ENCODE measurements at regions of chr19 and their contacts with region 1.

Region 1: GRCh38 chr19:39412100-39412866 is at the start of gene PLEKHG2:
- DNase-seq: peak; percentile 100
- ATAC-seq: peak; percentile 40 to 66
- H3K4me3 ChIP-seq: peak within 1 kb of the TSS; percentile 76
- H3K27ac ChIP-seq: peak within 1 kb of the TSS; percentile 94 to 99
- H3K4me1 ChIP-seq: peaks cover 43% of the 10 kb centered on the region
- CTCF ChIP-seq: peak; percentile 99
- EP300 ChIP-seq: peak in 1 of 2 experiments; percentile 61; a peak in 1 of 5 replicates
- POLR2A ChIP-seq: peak; percentile 64
- RAD21 ChIP-seq: peak; percentile 55 to 82
- polyA plus RNA-seq, gene PLEKHG2: 21.6 and 35.1 TPM in 2 replicates

Region 2: DNA sequence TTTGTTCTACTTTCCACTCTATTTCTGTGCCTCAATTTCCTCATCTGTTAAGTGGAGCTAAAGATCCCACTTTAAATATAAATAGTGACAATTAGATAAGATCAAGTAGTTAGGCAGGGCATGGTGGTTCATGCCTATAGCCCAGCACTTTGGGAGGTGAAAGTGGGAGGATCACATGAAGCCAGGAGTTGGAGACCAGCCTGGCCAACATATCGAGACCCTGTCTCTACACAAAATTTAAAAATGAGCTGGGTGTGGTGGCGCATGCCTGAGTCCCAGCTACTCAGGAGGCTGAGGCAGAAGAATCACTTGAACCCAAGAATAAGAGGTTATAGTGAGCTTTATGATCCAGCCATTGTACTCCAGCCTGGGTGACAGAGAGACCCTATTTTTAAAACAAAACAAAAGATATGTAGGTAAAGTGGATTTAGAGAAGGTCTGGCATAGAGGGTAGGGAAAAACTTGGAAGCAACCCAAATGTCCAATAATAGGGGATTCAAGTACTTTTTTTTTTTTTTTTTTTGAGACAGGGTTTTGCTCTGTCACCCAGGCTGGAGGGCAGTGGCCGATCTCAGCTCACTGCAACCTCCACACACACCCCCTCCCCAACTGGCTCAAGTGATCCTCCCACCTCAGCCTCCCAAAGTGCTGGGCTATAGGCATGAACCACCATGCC is 292.6 kb before region 1 on chr19:
- CTCF ChIA-PET with region 1: interaction called, 10 read pairs
- POLR2A ChIA-PET with region 1: no interaction called
- DNase-seq: no peak
- ATAC-seq: no peak
- H3K4me3 ChIP-seq: no peak overlapping the region
- H3K27ac ChIP-seq: peak overlapping the region in 1 of 2 experiments; percentile 53; a peak in 4 of 6 replicates
- H3K4me1 ChIP-seq: peaks cover 19% of the 10 kb centered on the region
- CTCF ChIP-seq: no peak
- EP300 ChIP-seq: no peak
- POLR2A ChIP-seq: no peak
- RAD21 ChIP-seq: no peak

Region 3: GRCh38 chr19:39351537-39352064 is 60.7 kb before region 1 on chr19:
- CTCF ChIA-PET with region 1: interaction called, 18 read pairs
- POLR2A ChIA-PET with region 1: interaction called, 4 read pairs
- DNase-seq: peak in 1 of 2 experiments; percentile 42
- ATAC-seq: no peak
- H3K4me3 ChIP-seq: no peak overlapping the region
- H3K27ac ChIP-seq: no peak overlapping the region
- H3K4me1 ChIP-seq: peaks cover 6% of the 10 kb centered on the region; the same call in 1 of the 3 replicates
- CTCF ChIP-seq: no peak
- EP300 ChIP-seq: 0 out of 5 replicates have a peak, but pooled peaks of 1 of the 2 experiments have one; percentile 18
- POLR2A ChIP-seq: no peak
- RAD21 ChIP-seq: no peak

Region 4: GRCh38 chr19:39372047-39372802 is 40.1 kb before region 1 on chr19:
- CTCF ChIA-PET with region 1: interaction called, 15 read pairs
- POLR2A ChIA-PET with region 1: interaction called, 9 read pairs
- DNase-seq: no peak
- ATAC-seq: no peak
- H3K4me3 ChIP-seq: no peak overlapping the region
- H3K27ac ChIP-seq: no peak overlapping the region
- H3K4me1 ChIP-seq: no peaks in the 10 kb centered on the region
- CTCF ChIP-seq: no peak
- EP300 ChIP-seq: no peak
- POLR2A ChIP-seq: no peak
- RAD21 ChIP-seq: no peak

Region 5: GRCh38 chr19:39390755-39391592 is 21.3 kb before region 1 on chr19 and contains the starts of genes MED29 and PAF1:
- CTCF ChIA-PET with region 1: interaction called, 484 read pairs
- POLR2A ChIA-PET with region 1: interaction called, 122 read pairs
- DNase-seq: peak; percentile 100
- ATAC-seq: peak; percentile 91 to 97
- H3K4me3 ChIP-seq: peak within 1 kb of the TSS; percentile 68
- H3K27ac ChIP-seq: peak within 1 kb of the TSS; percentile 89 to 90
- H3K4me1 ChIP-seq: peaks cover 15% of the 10 kb centered on the region; the same call in 2 of the 3 replicates
- CTCF ChIP-seq: no peak
- EP300 ChIP-seq: no peak
- POLR2A ChIP-seq: peak; percentile 99
- RAD21 ChIP-seq: no peak; a peak in 1 of 5 replicates
- polyA plus RNA-seq, gene MED29: 55.7 and 57.5 TPM in 2 replicates
- polyA plus RNA-seq, gene PAF1: 73.0 and 103 TPM in 2 replicates

Region 6: DNA sequence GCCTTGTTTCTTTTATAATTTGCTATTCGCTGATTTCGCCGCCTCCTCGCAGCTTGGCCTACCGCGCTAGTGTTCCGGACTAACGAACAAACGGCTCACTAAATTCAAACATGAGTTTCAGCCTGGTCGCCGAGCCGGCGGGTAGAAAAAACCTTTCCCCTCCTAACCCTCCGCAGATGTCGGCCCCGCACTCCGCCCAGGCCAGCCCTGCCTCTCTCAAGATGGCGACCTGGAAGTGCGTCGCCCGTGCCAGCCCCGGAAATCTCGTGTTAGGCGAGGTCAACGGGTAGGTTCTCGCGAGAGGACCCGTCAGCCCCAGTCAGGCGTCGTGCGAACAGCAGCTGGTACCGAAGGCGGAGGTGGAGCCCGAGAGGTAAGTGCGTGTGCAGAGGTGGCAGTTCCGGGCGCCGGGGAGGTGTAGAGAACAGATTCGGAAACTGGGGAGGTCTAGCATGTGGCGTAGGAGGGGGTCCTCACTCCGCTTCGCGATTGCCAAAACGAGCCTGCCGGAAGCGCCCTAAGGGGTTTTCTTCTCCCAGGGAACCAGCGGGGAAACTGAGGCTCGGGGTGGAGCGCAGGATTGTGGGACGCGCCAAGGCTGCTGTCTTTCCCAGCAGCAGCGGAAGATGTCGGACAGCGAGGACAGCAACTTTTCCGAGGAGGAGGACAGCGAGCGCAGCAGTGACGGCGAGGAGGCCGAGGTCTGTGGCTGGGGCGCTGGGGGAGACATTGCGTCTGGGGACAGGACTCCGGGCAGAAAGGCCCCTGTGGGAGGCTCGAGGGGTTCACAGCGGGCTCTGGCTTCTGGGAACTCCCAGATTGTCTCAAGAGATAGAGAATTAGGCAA is 33.2 kb after region 1 on chr19 and contains the start of gene SUPT5H:
- CTCF ChIA-PET with region 1: interaction called, 12 read pairs
- POLR2A ChIA-PET with region 1: interaction called, 12 read pairs
- DNase-seq: peak; percentile 100
- ATAC-seq: peak; percentile 94 to 97
- H3K4me3 ChIP-seq: peak within 1 kb of the TSS; percentile 80
- H3K27ac ChIP-seq: peak within 1 kb of the TSS; percentile 86 to 90
- H3K4me1 ChIP-seq: peaks cover 28% of the 10 kb centered on the region
- CTCF ChIP-seq: no peak
- EP300 ChIP-seq: no peak
- POLR2A ChIP-seq: peak; percentile 94
- RAD21 ChIP-seq: no peak
- polyA plus RNA-seq, gene SUPT5H: 133 and 186 TPM in 2 replicates